Activated CD8-positive, alpha-beta T cell treated with anti-CD3 and anti-CD28 coated beads for 36 hours (primary cell): ENCODE measurements at regions of chr14 and their contacts with region 1.

Region 1: GRCh38 chr14:70887207-70887681 is 20.0 kb upstream of the PCNX1 start:
- DNase-seq: no peak
- ATAC-seq: peak; percentile 8
- H3K4me3 Mint-ChIP-seq: peak overlapping the region; percentile 50
- H3K27ac Mint-ChIP-seq: peak overlapping the region; percentile 85
- H3K4me1 Mint-ChIP-seq: peaks cover 71% of the 10 kb centered on the region
- H3K27me3 Mint-ChIP-seq: no peaks in the 10 kb centered on the region
- CTCF ChIP-seq: no peak

Region 2: DNA sequence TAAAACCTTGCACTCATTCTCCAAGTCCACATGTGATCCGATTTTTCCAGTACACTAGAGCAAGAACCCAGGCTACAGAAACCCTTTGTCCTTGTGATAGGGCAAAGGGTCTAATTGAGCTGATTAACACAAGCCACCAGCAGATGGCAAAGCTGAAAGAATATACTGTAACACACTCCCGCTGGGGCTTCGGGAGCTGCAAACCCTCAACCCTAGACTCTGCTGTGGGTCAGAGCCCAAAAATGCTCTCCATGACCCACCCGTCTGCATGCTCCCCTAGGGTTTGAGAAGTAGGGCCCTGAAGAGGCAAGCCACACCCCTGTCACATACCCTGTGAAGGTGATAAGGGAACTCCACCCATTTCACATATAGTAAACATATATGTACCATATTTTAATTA is 13.6 kb before region 1 on chr14:
- CTCF ChIA-PET with region 1: interaction called, 23 read pairs
- POLR2A ChIA-PET with region 1: interaction called, 13 read pairs
- intact Hi-C with region 1: no loop called
- DNase-seq: peak; percentile 30
- ATAC-seq: no peak
- H3K4me3 Mint-ChIP-seq: no peak overlapping the region
- H3K27ac Mint-ChIP-seq: no peak overlapping the region
- H3K4me1 Mint-ChIP-seq: peaks cover 19% of the 10 kb centered on the region
- H3K27me3 Mint-ChIP-seq: no peaks in the 10 kb centered on the region
- CTCF ChIP-seq: no peak

Region 3: GRCh38 chr14:70897464-70897863 is 10.2 kb after region 1 on chr14:
- CTCF ChIA-PET with region 1: interaction called, 13 read pairs
- POLR2A ChIA-PET with region 1: interaction called, 163 read pairs
- intact Hi-C with region 1: no loop called
- DNase-seq: no peak
- ATAC-seq: no peak
- H3K4me3 Mint-ChIP-seq: no peak overlapping the region
- H3K27ac Mint-ChIP-seq: no peak overlapping the region
- H3K4me1 Mint-ChIP-seq: peaks cover 52% of the 10 kb centered on the region
- H3K27me3 Mint-ChIP-seq: peaks cover 1% of the 10 kb centered on the region
- CTCF ChIP-seq: no peak

Region 4: GRCh38 chr14:70955543-70956480 is 68.6 kb after region 1 on chr14:
- CTCF ChIA-PET with region 1: interaction called, 35 read pairs
- POLR2A ChIA-PET with region 1: no interaction called
- intact Hi-C with region 1: no loop called
- DNase-seq: peak; percentile 58
- ATAC-seq: peak; percentile 80
- H3K4me3 Mint-ChIP-seq: no peak overlapping the region
- H3K27ac Mint-ChIP-seq: no peak overlapping the region
- H3K4me1 Mint-ChIP-seq: peaks cover 37% of the 10 kb centered on the region
- H3K27me3 Mint-ChIP-seq: no peaks in the 10 kb centered on the region
- CTCF ChIP-seq: peak; percentile 78